ENCODE measurements at regions of chr5 and their contacts with region 1.

Region 1: DNA sequence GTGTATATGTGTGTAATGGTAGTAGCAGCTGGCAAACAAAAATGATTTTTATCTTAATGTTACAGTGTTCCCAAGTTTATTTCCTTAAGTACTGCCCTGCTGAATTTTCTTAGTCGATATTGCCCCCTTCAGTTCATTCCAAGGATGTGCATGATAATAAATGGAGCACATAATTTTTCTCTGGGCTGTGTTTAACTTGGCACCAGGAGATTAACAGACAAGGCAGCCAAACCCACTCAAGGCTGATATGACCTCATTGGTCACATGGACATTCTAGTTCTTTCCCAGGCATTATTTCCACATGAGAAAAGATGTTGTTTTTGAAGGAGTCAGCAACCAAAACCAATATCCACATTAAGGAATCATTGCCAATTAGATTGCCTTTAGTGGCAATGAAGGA is 61.8 kb downstream of the COX7C start:
- DNase-seq: peak; percentile 45
- ATAC-seq: peak; percentile 73
- H3K4me3 ChIP-seq: no peak overlapping the region
- H3K27ac ChIP-seq: no peak overlapping the region
- H3K4me1 ChIP-seq: no peaks in the 10 kb centered on the region
- H3K27me3 ChIP-seq: no peaks in the 10 kb centered on the region
- CTCF ChIP-seq: peak; percentile 67
- EP300 ChIP-seq: no peak
- POLR2A ChIP-seq: no peak
- RAD21 ChIP-seq: peak; percentile 42; the same call in 1 of the 2 replicates

Region 2: DNA sequence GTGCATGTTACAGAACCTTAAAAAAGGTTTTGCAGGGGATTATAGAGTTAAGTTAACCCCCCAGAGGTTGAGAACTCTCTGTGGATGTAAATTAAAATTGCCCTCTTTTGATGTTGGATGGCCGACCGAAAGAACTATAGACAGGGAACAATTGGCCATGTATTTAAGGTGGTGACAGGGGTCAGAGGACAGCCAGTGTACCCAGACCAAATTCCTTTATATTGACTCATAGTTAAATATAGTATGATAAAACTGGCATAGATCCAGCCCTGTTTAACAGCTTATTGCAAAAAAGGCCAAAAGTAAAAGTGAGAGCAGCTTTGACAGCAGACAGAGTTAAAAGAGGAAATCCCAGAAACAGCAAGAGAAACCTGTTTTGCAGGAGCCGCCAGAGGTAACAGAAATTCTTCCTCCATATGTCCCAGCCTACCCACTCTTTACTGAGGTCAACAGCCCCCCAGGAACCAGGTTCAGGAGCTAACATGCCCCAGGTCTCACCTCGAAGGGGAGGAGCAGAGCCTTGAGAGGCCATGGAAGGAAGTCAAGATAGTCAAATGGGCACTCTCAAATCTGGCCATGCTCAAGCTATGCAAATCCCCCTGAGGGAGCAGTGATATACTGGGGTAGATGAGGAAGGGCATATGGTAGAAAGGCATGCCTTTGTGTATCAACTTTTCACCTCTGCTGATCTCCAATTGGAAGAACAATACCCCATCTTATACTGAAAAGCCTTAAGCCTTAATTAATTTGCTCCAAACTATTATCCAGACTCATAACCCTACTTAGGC is 218.2 kb before region 1 on chr5:
- CTCF ChIA-PET with region 1: no interaction called
- POLR2A ChIA-PET with region 1: no interaction called
- in situ Hi-C with region 1: no loop called
- intact Hi-C with region 1: loop called (anchors 10 kb)
- DNase-seq: peak; percentile 27
- ATAC-seq: no peak
- H3K4me3 ChIP-seq: no peak overlapping the region
- H3K27ac ChIP-seq: no peak overlapping the region
- H3K4me1 ChIP-seq: peaks cover 11% of the 10 kb centered on the region
- H3K27me3 ChIP-seq: no peaks in the 10 kb centered on the region
- CTCF ChIP-seq: no peak
- EP300 ChIP-seq: no peak
- POLR2A ChIP-seq: no peak
- RAD21 ChIP-seq: no peak

Region 3: DNA sequence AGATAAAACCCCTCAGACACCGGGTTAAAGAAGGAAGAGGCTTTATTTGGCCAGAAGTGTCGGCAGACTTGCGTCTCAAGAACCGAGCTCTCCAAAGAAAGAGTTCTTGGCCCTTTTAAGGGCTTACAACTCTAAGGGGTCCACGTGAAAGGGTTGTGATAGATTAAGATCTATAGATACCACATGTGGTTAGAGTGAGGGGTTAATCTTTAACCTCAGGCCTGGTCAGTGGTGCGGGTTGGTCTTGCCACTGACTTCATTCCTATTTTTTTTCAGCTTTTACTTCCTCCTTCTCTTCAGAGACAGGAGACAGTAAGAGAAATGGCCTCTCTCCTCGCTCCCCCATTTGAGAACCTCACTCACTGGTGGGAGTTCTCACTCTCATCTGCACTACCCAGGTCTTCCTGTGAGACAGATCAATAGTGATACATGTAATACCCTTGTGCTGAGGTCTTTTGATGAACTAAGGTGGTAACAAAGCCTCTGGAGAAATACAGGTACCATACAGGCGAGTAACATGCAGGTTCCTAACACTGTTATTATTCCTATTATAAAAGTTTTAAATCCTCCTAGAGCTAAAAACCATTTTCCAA is 114.2 kb before region 1 on chr5:
- CTCF ChIA-PET with region 1: no interaction called
- POLR2A ChIA-PET with region 1: no interaction called
- in situ Hi-C with region 1: no loop called
- intact Hi-C with region 1: loop called (anchors 10 kb)
- DNase-seq: peak; percentile 9
- ATAC-seq: peak; percentile 87
- H3K4me3 ChIP-seq: no peak overlapping the region
- H3K27ac ChIP-seq: no peak overlapping the region
- H3K4me1 ChIP-seq: peaks cover 17% of the 10 kb centered on the region
- H3K27me3 ChIP-seq: no peaks in the 10 kb centered on the region
- CTCF ChIP-seq: no peak
- EP300 ChIP-seq: no peak
- POLR2A ChIP-seq: no peak
- RAD21 ChIP-seq: no peak

Region 4: GRCh38 chr5:86640998-86641397 is 38.5 kb before region 1 on chr5:
- CTCF ChIA-PET with region 1: no interaction called
- POLR2A ChIA-PET with region 1: no interaction called
- in situ Hi-C with region 1: no loop called
- intact Hi-C with region 1: no loop called
- DNase-seq: no peak
- ATAC-seq: no peak
- H3K4me3 ChIP-seq: no peak overlapping the region
- H3K27ac ChIP-seq: no peak overlapping the region
- H3K4me1 ChIP-seq: no peaks in the 10 kb centered on the region
- H3K27me3 ChIP-seq: no peaks in the 10 kb centered on the region
- CTCF ChIP-seq: no peak
- EP300 ChIP-seq: no peak
- POLR2A ChIP-seq: no peak
- RAD21 ChIP-seq: no peak

Region 5: GRCh38 chr5:87008751-87009560 is 329.4 kb after region 1 on chr5:
- CTCF ChIA-PET with region 1: no interaction called
- POLR2A ChIA-PET with region 1: no interaction called
- in situ Hi-C with region 1: no loop called
- intact Hi-C with region 1: loop called (anchors 5 kb)
- DNase-seq: no peak
- ATAC-seq: no peak
- H3K4me3 ChIP-seq: no peak overlapping the region
- H3K27ac ChIP-seq: no peak overlapping the region
- H3K4me1 ChIP-seq: no peaks in the 10 kb centered on the region
- H3K27me3 ChIP-seq: no peaks in the 10 kb centered on the region; a peak in 1 of 5 replicates
- CTCF ChIP-seq: no peak
- EP300 ChIP-seq: no peak
- POLR2A ChIP-seq: no peak
- RAD21 ChIP-seq: no peak

Measured in HepG2 (cell line).